CD8-positive, alpha-beta T cell (primary cell): ENCODE measurements at regions of chr1 and their contacts with region 1.

Region 1: GRCh38 chr1:198749279-198749678 is 110.4 kb downstream of the PTPRC start:
- DNase-seq: no peak
- ATAC-seq: no peak
- H3K4me3 ChIP-seq: no peak overlapping the region
- H3K4me3 Mint-ChIP-seq: no peak overlapping the region
- H3K27ac ChIP-seq: no peak overlapping the region
- H3K27ac Mint-ChIP-seq: peak overlapping the region; percentile 15
- H3K4me1 ChIP-seq: peaks cover 29% of the 10 kb centered on the region
- H3K4me1 Mint-ChIP-seq: peaks cover 19% of the 10 kb centered on the region
- H3K27me3 ChIP-seq: no peaks in the 10 kb centered on the region
- H3K27me3 Mint-ChIP-seq: no peaks in the 10 kb centered on the region
- CTCF ChIP-seq: no peak

Region 2: GRCh38 chr1:198560093-198560638 is 189.1 kb before region 1 on chr1:
- CTCF ChIA-PET with region 1: no interaction called
- POLR2A ChIA-PET with region 1: no interaction called
- intact Hi-C with region 1: no loop called
- DNase-seq: peak in 1 of 9 experiments; percentile 31
- ATAC-seq: no peak
- H3K4me3 ChIP-seq: no peak overlapping the region
- H3K4me3 Mint-ChIP-seq: no peak overlapping the region
- H3K27ac ChIP-seq: peak overlapping the region in 1 of 2 experiments; percentile 44
- H3K27ac Mint-ChIP-seq: peak overlapping the region; percentile 24
- H3K4me1 ChIP-seq: peaks cover 81% of the 10 kb centered on the region
- H3K4me1 Mint-ChIP-seq: peaks cover 78% of the 10 kb centered on the region
- H3K27me3 ChIP-seq: no peaks in the 10 kb centered on the region
- H3K27me3 Mint-ChIP-seq: no peaks in the 10 kb centered on the region
- CTCF ChIP-seq: no peak

Region 3: DNA sequence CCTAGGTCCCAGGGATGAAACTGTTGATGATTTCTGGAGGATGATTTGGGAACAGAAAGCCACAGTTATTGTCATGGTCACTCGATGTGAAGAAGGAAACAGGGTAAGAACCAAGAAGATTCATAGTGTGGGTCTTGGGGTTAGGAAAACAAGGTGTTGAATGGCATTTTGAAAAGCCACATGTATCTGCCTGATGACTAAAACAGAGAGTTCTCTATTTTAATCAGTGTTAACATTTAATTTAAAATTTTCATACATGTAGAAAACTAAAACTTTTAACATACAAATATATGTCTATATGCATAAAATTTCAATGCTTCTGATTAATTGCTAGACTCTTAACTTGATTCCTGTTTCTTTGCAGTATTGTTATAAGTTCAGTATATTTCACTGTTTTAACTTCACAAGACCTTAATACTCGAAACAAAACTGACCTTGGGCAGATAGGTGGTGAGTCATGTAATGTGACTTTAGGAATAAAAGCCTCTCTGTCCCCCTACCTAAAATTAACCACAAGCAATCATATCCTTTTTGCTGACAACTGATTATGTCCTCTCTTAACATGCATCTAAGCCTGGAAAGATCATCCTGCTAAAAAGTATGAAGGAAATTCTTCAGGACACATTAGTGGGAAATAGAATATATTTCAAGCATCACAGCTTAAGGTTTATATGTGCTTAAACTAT is 14.8 kb before region 1 on chr1:
- CTCF ChIA-PET with region 1: no interaction called
- POLR2A ChIA-PET with region 1: interaction called, 3 read pairs
- intact Hi-C with region 1: loop called (anchors 1 to 2 kb)
- DNase-seq: no peak
- ATAC-seq: no peak
- H3K4me3 ChIP-seq: no peak overlapping the region
- H3K4me3 Mint-ChIP-seq: no peak overlapping the region
- H3K27ac ChIP-seq: peak overlapping the region in 1 of 2 experiments; percentile 26
- H3K27ac Mint-ChIP-seq: peak overlapping the region; percentile 49
- H3K4me1 ChIP-seq: peaks cover 32% of the 10 kb centered on the region
- H3K4me1 Mint-ChIP-seq: peaks cover 69% of the 10 kb centered on the region
- H3K27me3 ChIP-seq: no peaks in the 10 kb centered on the region
- H3K27me3 Mint-ChIP-seq: no peaks in the 10 kb centered on the region
- CTCF ChIP-seq: no peak

Region 4: DNA sequence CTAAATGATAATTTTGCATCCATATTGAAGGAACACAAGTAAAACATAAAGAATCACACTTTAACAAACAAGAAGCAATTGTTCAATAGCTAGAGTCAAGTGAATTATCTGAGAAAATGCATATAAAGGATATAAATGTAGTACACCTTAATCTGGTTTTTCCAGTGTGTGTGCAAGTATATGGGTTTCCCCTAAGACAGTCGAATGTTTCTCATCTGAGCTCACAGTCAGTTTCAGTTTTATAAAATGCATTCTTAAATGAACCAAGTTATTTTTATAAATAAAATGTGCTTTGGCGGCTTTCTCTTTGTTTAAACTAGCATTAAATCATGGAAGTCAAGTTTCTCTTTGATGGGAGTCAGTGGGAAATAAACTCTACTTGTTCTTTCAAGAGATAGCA is 15.5 kb after region 1 on chr1:
- CTCF ChIA-PET with region 1: interaction called, 3 read pairs
- POLR2A ChIA-PET with region 1: interaction called, 3 read pairs
- intact Hi-C with region 1: loop called in 1 of 2 experiments (anchors 2 kb)
- DNase-seq: no peak
- ATAC-seq: no peak
- H3K4me3 ChIP-seq: no peak overlapping the region
- H3K4me3 Mint-ChIP-seq: no peak overlapping the region
- H3K27ac ChIP-seq: no peak overlapping the region
- H3K27ac Mint-ChIP-seq: no peak overlapping the region
- H3K4me1 ChIP-seq: peaks cover 6% of the 10 kb centered on the region
- H3K4me1 Mint-ChIP-seq: peaks cover 33% of the 10 kb centered on the region
- H3K27me3 ChIP-seq: no peaks in the 10 kb centered on the region
- H3K27me3 Mint-ChIP-seq: no peaks in the 10 kb centered on the region
- CTCF ChIP-seq: no peak